Sciatic nerve (tissue), 2 donors: ENCODE measurements at regions of chr9 and their contacts with region 1.

Region 1: DNA sequence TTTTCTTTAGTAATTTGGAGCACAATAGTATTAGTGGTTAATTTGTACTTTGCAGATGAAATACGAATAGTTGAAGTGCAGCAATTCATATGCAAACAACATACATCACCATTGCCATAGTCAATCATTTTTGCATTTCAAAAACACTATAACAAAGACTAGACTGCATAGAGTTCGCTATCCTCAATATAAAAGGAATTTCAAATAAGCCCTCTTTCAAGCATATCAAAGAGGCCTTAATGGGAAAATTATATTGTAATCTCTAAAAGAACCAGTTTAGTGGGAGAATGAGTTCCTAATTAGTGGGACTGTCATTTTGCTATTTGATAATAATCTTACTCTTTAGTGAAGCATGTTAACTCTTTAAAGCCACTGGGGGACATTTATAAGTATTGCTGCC is 2302.3 kb upstream of the C9orf72 start:
- DNase-seq: no peak
- ATAC-seq: no peak

Region 2: DNA sequence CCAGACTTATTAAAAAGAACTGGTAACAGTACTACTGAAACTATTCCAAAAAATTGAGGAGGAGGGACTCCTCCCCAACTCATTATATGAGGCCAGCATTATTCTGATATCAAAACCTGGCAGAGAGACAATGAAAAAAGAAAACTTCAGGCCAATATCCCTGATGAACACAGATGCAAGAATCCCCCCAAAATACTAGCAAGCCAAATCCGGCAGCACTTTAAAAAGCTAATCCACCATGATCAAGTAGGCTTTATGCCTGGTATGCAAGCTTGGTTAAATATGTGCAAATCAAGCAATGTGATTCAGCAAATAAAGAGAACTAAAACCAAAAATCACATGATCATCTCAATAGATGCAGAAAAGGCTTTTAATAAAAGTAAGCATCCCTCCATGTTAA is 31.3 kb before region 1 on chr9:
- intact Hi-C with region 1: no loop called
- DNase-seq: no peak
- ATAC-seq: no peak

Region 3: GRCh38 chr9:29945012-29945411 is 69.5 kb after region 1 on chr9:
- intact Hi-C with region 1: no loop called
- DNase-seq: no peak
- ATAC-seq: no peak

Region 4: DNA sequence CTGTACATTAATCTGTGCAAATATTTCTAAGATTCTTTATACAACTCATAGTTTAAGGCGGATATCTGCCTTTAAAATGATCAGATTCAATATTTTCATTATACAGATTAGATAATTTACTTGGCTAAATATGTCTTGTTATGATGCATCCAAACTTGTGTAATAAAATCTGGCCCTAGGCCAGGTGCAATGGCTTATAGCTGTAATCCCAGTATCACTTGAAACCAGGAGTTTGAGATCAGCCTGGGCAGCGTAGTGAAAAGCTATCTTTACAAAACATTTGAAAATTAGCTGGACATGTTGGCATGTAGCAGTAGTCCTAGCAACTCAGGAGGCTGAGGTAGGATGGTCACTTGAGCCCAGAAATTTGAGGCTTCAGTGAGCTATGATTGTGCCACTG is 506.7 kb after region 1 on chr9:
- intact Hi-C with region 1: loop called (anchors 5 kb)
- DNase-seq: no peak
- ATAC-seq: no peak